ENCODE measurements at regions of chr19 and their contacts with region 1.

Region 1: DNA sequence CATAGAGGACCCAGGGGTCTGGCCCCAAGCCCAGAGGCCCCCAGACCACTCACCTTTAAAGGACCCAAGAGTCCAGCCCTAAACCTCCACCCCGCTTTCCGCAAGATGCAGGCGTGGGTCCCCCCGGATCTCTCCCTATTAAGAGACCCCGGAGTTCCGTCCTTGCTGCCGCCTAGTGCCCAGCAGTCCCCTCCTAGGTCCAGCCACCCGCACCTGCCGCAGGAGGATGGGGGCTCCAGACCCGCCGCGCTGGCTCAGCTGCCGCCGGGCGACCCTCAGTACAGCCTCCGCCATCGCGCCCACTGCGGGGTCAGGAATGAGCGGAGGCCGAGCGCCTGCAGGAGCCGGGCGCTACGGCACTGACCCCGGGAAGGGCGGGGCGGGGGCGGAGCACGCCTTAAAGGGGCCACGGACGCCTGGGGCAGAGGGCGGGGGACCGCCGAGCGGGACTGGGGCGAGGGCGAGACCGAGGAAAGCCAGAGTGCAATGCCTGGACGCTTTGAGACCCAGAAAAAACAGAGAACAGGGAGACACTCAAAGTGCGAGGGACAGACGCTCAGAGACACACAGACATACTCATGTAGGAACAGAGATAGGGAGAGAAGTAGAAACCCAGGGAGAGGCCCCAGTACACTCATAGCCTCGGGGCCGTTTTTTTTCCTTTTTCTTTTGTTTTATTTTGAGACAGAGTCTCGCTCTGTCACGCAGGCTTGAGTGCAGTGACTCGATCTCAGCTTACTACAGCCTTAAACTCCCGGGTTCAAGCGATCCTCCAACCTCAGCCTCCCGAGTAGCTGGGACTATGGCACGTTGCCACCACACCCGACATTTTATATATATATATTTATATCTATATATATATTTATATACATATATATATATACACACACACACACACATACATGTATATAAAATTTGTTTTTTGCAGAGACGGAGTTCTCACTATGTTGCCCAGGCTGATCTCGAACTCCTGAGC is at the start of gene ETHE1:
- DNase-seq: peak; percentile 89
- ATAC-seq: peak; percentile 87
- H3K4me3 Mint-ChIP-seq: peak within 1 kb of the TSS; percentile 80
- H3K27ac Mint-ChIP-seq: peak within 1 kb of the TSS; percentile 82
- H3K4me1 Mint-ChIP-seq: peaks cover 20% of the 10 kb centered on the region
- H3K27me3 Mint-ChIP-seq: no peaks in the 10 kb centered on the region
- total RNA-seq, gene ETHE1: 57.1 to 61.1 TPM

Region 2: DNA sequence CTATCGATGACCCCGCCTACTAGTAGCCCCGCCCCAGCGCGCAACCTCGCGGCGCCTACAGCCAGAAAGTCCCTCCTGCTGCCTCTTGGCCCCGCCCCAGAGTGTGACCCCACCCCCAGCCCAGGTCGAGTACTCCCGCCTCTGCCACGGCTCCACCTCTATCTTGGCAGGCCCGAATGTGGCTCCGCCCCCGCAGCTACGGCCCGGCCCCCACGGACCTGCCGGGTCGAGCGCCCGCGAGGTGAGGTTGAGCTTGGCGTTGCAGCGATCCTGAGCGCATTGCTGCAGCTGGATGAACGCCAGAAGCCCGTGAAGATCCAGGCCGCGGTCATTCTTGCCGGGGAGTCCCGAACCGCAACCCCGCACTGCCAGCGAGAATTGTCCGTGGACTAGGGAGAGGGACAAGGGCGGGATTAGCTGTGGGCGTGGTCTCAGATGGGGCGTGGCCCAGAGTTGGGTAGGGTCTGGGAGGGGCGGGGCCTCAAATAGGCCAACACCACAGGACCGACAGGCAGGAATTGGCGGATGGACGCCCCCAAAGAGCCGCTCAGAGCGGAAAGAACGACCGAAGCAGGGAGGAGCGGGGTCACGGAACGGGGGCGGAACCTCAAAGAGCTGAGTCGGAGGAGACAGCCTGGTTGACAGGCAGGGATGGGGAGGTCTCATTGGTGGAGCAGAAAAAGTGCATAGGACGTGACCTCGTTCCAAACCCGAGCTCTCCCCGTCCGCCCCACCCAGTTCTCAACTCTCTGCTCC is 63.6 kb before region 1 on chr19:
- POLR2A ChIA-PET with region 1: interaction called, 18 read pairs
- DNase-seq: peak; percentile 98
- ATAC-seq: peak; percentile 81
- H3K4me3 Mint-ChIP-seq: peak overlapping the region; percentile 82
- H3K27ac Mint-ChIP-seq: peak overlapping the region; percentile 91
- H3K4me1 Mint-ChIP-seq: peaks cover 14% of the 10 kb centered on the region
- H3K27me3 Mint-ChIP-seq: no peaks in the 10 kb centered on the region